ENCODE measurements at regions of chr17 and their contacts with region 1.

Region 1: DNA sequence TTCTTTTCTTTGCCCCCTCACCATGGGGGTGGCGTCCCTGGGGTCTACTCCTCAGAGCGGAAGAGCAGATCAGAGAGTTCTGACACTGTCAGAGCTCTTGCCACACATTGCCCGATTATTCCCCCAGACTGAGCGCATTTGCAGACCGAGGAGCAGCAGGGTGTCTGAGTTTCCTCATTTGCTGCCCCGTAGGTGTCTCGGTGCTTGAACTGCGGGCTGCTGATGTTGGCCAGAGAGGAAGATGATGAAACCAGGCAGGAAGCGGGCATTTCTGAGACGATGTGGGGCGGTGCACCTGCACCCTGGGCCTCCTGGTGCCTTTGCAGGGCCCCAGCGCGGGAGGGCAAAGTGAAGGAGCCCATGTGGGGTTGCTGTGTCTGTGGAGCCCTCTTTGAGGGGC is 55.2 kb downstream of the ARSG start:
- DNase-seq: peak; percentile 88
- ATAC-seq: peak; percentile 81
- H3K4me3 Mint-ChIP-seq: peak overlapping the region; percentile 77
- H3K27ac Mint-ChIP-seq: peak overlapping the region; percentile 100
- H3K4me1 Mint-ChIP-seq: peaks cover 77% of the 10 kb centered on the region
- H3K27me3 Mint-ChIP-seq: no peaks in the 10 kb centered on the region

Region 2: GRCh38 chr17:68356520-68356919 is 10.1 kb after region 1 on chr17:
- CTCF ChIA-PET with region 1: interaction called, 9 read pairs
- POLR2A ChIA-PET with region 1: interaction called, 18 read pairs
- DNase-seq: peak; percentile 88
- ATAC-seq: peak; percentile 94
- H3K4me3 Mint-ChIP-seq: peak overlapping the region; percentile 60
- H3K27ac Mint-ChIP-seq: peak overlapping the region; percentile 86
- H3K4me1 Mint-ChIP-seq: peaks cover 75% of the 10 kb centered on the region
- H3K27me3 Mint-ChIP-seq: no peaks in the 10 kb centered on the region